ENCODE measurements at regions of chr13 and their contacts with region 1.

Region 1: GRCh38 chr13:30114571-30115256 is 192.6 kb downstream of the KATNAL1 start:
- DNase-seq: peak; percentile 85 to 95 (median 92)
- H3K4me3 ChIP-seq: peak overlapping the region in 2 of 4 donors; percentile 10 to 92
- H3K27ac ChIP-seq: peak overlapping the region in 3 of 5 donors; percentile 16 to 75 (median 51)
- H3K4me1 ChIP-seq: peaks cover 5 to 19% of the 10 kb centered on the region in 2 donors
- H3K27me3 ChIP-seq: no peaks in the 10 kb centered on the region
- CTCF ChIP-seq: peak; percentile 73 to 94 (median 87)
- POLR2A ChIP-seq: peak; percentile 47 to 77

Region 2: DNA sequence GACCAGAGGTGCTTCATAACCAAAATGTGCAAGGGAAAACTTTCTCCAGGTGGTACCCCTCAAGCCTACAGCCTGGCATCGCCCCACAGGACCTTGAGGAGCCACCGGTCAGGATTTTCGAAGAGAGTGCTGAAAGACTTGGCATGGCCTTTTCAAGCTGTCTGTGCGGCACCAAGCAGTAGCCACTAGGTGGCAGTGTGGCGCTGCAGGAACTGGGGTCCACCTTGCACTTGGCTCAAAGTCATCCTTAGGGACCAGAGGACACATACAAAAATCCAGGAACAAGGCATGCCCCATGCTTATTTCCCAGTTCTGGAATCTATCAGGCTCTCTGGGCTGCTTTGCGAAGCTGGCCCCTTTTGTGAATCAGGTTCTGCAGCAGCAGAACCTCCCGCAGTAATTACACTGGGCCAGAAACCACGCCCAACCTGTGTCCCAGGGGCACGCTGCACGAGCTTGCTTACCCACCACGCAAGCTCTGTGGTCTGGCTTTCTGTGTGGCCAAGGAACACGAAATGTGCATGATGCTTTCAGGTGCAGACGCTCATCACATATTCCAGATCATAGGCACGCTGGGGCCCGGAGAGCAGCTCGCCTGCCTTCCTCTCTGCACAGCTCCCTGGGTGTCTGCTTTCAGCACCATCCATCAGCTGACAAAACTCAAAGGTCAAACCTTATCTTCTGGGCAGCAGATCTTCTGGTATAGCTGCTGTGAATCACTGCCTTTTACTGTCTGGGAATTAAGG is 606.4 kb before region 1 on chr13:
- intact Hi-C with region 1: loop called (anchors 2 to 5 kb)
- DNase-seq: peak; percentile 72 to 95 (median 87)
- H3K4me3 ChIP-seq: no peak overlapping the region
- H3K27ac ChIP-seq: no peak overlapping the region
- H3K4me1 ChIP-seq: peaks cover 0 to 4% of the 10 kb centered on the region in 2 donors
- H3K27me3 ChIP-seq: peaks cover 15% of the 10 kb centered on the region
- CTCF ChIP-seq: peak; percentile 92 to 99 (median 94)
- POLR2A ChIP-seq: no peak

Region 3: DNA sequence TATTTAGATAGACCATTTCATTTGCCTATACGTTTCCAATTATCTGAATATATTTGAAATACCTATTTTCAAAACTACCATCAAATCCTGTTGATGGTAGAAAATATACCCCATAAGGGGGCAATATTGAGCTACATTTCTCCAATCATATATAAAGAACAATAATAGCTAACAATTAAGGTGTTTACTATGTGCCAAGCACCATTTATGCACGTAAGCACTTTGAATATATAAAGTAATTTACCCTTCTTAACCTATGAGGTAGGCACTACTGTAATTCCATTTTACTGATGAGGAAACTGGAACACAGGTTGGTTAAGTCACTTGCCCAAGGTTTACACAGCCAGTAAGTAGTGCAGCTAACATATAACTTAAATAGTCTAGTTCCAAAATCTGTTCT is 343.5 kb before region 1 on chr13:
- intact Hi-C with region 1: loop called (anchors 5 kb)
- DNase-seq: no peak
- H3K4me3 ChIP-seq: no peak overlapping the region
- H3K27ac ChIP-seq: no peak overlapping the region
- H3K4me1 ChIP-seq: no peaks in the 10 kb centered on the region
- H3K27me3 ChIP-seq: no peaks in the 10 kb centered on the region
- CTCF ChIP-seq: peak; percentile 25 to 63 (median 50)
- POLR2A ChIP-seq: no peak

Region 4: GRCh38 chr13:29850224-29850898 is 264.4 kb before region 1 on chr13 and contains the start of gene UBL3:
- intact Hi-C with region 1: loop called (anchors 10 kb)
- DNase-seq: peak; percentile 96 to 98 (median 97)
- H3K4me3 ChIP-seq: peak within 1 kb of the TSS; percentile 0 to 91 (median 64)
- H3K27ac ChIP-seq: peak within 1 kb of the TSS; percentile 93 to 99 (median 98)
- H3K4me1 ChIP-seq: peaks cover 0 to 29% of the 10 kb centered on the region in 2 donors
- H3K27me3 ChIP-seq: no peaks in the 10 kb centered on the region
- CTCF ChIP-seq: no peak
- POLR2A ChIP-seq: peak; percentile 82 to 83
- total RNA-seq, gene UBL3: 18.8 to 41.5 (median 24.6) TPM

Region 5: DNA sequence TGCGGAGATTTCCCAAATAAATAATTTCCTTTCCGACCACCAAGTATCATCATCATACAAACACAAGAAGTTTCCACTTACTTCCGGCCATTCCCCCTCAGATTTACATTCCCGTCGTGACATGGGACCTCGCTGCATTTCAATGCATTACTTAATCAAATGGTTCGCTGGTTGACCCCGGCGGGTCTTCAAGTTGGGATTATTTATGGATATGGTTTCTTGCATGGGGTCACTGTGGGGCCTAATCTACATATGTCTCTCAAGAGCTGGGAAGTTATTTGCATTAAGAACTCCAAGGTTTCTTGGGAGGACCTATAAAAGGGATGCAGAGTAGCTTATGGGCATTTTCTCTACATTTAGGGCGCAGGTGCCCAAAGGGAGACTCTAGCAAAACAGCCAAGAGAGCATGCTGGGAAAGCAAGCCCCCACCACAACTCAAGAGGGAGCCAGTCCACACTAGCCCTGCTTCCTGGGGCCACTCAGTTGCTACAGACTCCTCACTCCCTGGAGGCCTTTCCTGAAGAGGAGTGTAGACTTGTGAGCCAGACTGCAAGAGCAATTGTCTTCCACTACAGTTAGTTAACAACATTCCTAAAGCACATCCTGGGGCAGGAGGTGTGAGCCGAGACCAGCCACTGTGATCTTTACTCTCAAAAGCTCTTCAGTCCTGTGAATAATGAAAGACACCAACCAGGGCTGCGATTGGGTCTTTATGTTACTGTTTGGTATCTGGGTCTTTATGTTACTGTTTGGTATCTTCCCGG is 67.4 kb after region 1 on chr13:
- intact Hi-C with region 1: no loop called
- DNase-seq: no peak
- H3K4me3 ChIP-seq: no peak overlapping the region
- H3K27ac ChIP-seq: no peak overlapping the region
- H3K4me1 ChIP-seq: no peaks in the 10 kb centered on the region
- H3K27me3 ChIP-seq: no peaks in the 10 kb centered on the region
- CTCF ChIP-seq: no peak
- POLR2A ChIP-seq: no peak

Region 6: GRCh38 chr13:30364876-30365275 is 250.2 kb after region 1 on chr13:
- intact Hi-C with region 1: no loop called
- DNase-seq: no peak
- H3K4me3 ChIP-seq: no peak overlapping the region
- H3K27ac ChIP-seq: no peak overlapping the region
- H3K4me1 ChIP-seq: peaks cover 0 to 9% of the 10 kb centered on the region in 2 donors
- H3K27me3 ChIP-seq: no peaks in the 10 kb centered on the region
- CTCF ChIP-seq: no peak
- POLR2A ChIP-seq: no peak